BJ (cell line): ENCODE measurements at regions of chr10 and their contacts with region 1.

Region 1: DNA sequence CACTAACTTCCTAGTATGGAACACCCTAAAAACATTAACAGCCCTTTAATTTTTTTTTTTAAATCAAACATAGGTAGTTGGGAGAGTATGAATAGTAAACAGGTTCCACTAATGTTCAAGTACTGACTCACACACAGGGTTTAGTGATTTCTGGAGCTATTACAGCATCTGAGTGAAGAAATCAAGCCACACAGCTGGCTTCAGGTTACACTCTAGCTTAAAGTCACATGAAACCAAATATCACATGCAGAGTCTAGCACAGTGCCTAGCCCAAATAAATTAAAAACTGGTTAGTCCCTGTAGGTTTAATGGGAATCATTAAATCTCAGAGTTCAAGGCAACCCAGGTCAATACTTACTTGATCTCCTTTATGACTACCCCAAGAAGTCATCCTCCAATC is 11.6 kb downstream of the PANK1 start:
- DNase-seq: peak; percentile 67
- H3K4me3 ChIP-seq: no peak overlapping the region
- H3K27me3 ChIP-seq: no peaks in the 10 kb centered on the region
- CTCF ChIP-seq: no peak

Region 2: GRCh38 chr10:89183571-89183970 is 449.9 kb before region 1 on chr10:
- CTCF ChIA-PET with region 1: no interaction called
- POLR2A ChIA-PET with region 1: no interaction called
- DNase-seq: no peak
- H3K4me3 ChIP-seq: no peak overlapping the region
- H3K27me3 ChIP-seq: peaks cover 3% of the 10 kb centered on the region; the same call in 1 of the 2 replicates
- CTCF ChIP-seq: no peak

Region 3: DNA sequence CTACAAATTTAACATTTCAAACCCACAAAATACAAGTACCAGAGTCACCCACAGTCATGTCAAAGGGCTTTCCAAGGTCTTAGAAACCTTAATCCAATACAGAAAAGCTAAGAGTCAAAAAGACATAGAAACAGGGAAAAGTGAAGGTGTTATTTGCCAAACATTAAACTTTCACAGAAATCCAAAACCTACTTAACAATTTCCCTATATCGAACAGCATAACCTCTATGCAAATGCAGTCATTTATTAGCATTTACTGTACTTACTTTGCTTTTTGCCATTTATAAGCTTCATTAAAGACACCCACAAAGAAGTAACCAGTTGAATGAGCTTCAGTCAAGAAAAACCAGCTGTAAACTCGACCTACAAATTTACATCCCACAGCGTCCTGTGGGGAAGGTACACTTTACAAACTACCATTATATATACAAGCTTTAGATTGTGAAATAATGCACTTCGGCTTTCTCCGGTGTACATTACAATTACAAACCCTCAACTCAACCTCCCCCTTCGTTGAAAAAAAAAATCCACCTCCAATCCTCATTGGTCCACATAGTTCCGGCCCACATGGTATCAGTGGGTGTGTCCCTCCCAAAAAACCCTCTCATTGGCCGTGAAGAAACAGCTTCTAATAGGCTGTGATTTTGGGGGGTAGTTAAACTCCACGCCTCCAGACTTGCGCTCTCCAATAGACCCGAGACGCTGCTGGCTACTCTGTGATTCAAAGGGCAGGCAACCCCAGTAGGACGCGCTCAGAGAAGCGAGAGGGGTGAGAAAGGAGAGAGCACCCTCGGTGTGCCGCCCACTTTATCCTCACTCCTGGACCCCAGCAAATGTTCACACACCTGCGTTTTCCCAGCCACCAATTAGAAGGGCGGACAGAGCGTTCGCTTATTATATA is 10.2 kb after region 1 on chr10:
- CTCF ChIA-PET with region 1: interaction called, 11 read pairs
- POLR2A ChIA-PET with region 1: no interaction called
- DNase-seq: peak; percentile 73
- H3K4me3 ChIP-seq: peak overlapping the region; percentile 69
- H3K27me3 ChIP-seq: no peaks in the 10 kb centered on the region
- CTCF ChIP-seq: no peak

Region 4: DNA sequence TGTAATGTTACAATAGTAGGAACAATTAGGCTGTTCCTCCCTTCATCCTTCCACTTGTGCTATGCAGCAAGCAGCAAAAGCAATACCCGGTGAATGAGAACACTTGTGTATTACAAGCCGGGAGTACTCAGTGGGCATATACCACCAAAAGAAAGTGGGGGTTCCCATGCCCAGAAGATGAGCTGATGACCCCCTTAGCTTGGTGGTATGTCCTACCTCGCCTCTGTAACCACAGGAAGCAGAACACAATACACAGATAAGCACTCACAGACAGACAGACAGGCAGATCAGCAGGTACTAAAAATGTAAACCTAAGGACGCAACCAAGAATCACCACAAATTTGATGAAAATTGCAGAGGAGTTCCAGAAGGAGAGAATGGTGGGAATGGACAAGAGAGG is 52.5 kb after region 1 on chr10:
- CTCF ChIA-PET with region 1: no interaction called
- POLR2A ChIA-PET with region 1: no interaction called
- DNase-seq: no peak
- H3K4me3 ChIP-seq: no peak overlapping the region
- H3K27me3 ChIP-seq: no peaks in the 10 kb centered on the region
- CTCF ChIP-seq: no peak